Common myeloid progenitor, CD34-positive (primary cell): ENCODE measurements at regions of chrX and their contacts with region 1.

Region 1: GRCh38 chrX:153507484-153508178 is 9.8 kb upstream of the ATP2B3 start:
- DNase-seq: peak; percentile 61 to 83 (median 74)
- H3K4me3 ChIP-seq: no peak overlapping the region
- H3K27ac ChIP-seq: no peak overlapping the region
- H3K4me1 ChIP-seq: peaks cover 0 to 1% (median 0%) of the 10 kb centered on the region in 4 experiments
- H3K27me3 ChIP-seq: peaks cover 0 to 22% (median 0%) of the 10 kb centered on the region in 5 experiments

Region 2: GRCh38 chrX:152941328-152942106 is 566.1 kb before region 1 on chrX:
- CTCF ChIA-PET with region 1: interaction called, 12 read pairs
- POLR2A ChIA-PET with region 1: no interaction called
- DNase-seq: peak; percentile 90 to 95 (median 94)
- H3K4me3 ChIP-seq: peak overlapping the region; percentile 40 to 86 (median 67)
- H3K27ac ChIP-seq: peak overlapping the region in 1 of 2 experiments; percentile 61
- H3K4me1 ChIP-seq: peaks cover 0 to 12% (median 8%) of the 10 kb centered on the region in 4 experiments
- H3K27me3 ChIP-seq: peaks cover 0 to 18% (median 0%) of the 10 kb centered on the region in 5 experiments

Region 3: DNA sequence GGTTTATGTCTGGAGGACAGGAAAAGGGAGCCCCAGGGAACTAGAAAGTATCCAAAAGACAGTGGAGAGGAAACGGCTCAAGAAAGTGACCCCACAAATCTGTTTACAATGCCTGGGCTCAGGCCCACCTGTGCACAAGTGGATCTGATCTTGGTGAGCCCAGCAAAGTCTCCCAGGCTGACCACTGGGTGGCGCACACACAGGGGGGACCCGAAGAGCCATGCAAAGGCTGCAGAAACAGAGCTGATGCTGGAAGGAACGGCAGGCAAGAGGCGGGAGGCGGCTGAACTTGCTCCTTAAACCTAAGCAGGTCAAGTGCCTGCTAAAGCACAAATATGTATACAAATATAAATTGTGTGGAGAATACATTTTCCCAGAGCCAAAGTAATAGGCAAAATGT is 46.8 kb before region 1 on chrX:
- CTCF ChIA-PET with region 1: interaction called, 19 read pairs
- POLR2A ChIA-PET with region 1: no interaction called
- DNase-seq: peak; percentile 30 to 65 (median 58)
- H3K4me3 ChIP-seq: no peak overlapping the region
- H3K27ac ChIP-seq: no peak overlapping the region
- H3K4me1 ChIP-seq: no peaks in the 10 kb centered on the region
- H3K27me3 ChIP-seq: peaks cover 0 to 11% (median 0%) of the 10 kb centered on the region in 5 experiments

Region 4: GRCh38 chrX:153470435-153471363 is 36.9 kb before region 1 on chrX and contains the start of gene HAUS7:
- CTCF ChIA-PET with region 1: interaction called, 43 read pairs
- POLR2A ChIA-PET with region 1: no interaction called
- DNase-seq: peak; percentile 90 to 95 (median 94)
- H3K4me3 ChIP-seq: peak within 1 kb of the TSS; percentile 28 to 80 (median 73)
- H3K27ac ChIP-seq: peak within 1 kb of the TSS in 1 of 2 experiments; percentile 70
- H3K4me1 ChIP-seq: peaks cover 0 to 24% (median 9%) of the 10 kb centered on the region in 4 experiments
- H3K27me3 ChIP-seq: peaks cover 0 to 10% (median 0%) of the 10 kb centered on the region in 5 experiments